CD4-positive, alpha-beta T cell (primary cell): ENCODE measurements at regions of chr4 and their contacts with region 1.

Region 1: GRCh38 chr4:164731827-164732474 is 22.0 kb upstream of the SMIM31 start:
- DNase-seq: peak; percentile 7 to 67 (median 33)
- ATAC-seq: peak; percentile 71
- H3K4me3 ChIP-seq: no peak overlapping the region
- H3K4me3 Mint-ChIP-seq: no peak overlapping the region
- H3K27ac ChIP-seq: no peak overlapping the region
- H3K27ac Mint-ChIP-seq: no peak overlapping the region
- H3K4me1 ChIP-seq: no peaks in the 10 kb centered on the region
- H3K4me1 Mint-ChIP-seq: no peaks in the 10 kb centered on the region
- H3K27me3 ChIP-seq: peaks cover 0 to 10% of the 10 kb centered on the region in 2 experiments
- H3K27me3 Mint-ChIP-seq: peaks cover 28% of the 10 kb centered on the region
- CTCF ChIP-seq: peak; percentile 90

Region 2: GRCh38 chr4:163484906-163485305 is 1247.0 kb before region 1 on chr4:
- CTCF ChIA-PET with region 1: no interaction called
- POLR2A ChIA-PET with region 1: no interaction called
- intact Hi-C with region 1: loop called (anchors 5 to 10 kb)
- DNase-seq: peak; percentile 14 to 77 (median 39)
- ATAC-seq: peak; percentile 60
- H3K4me3 ChIP-seq: no peak overlapping the region
- H3K4me3 Mint-ChIP-seq: no peak overlapping the region
- H3K27ac ChIP-seq: no peak overlapping the region
- H3K27ac Mint-ChIP-seq: no peak overlapping the region
- H3K4me1 ChIP-seq: no peaks in the 10 kb centered on the region
- H3K4me1 Mint-ChIP-seq: no peaks in the 10 kb centered on the region
- H3K27me3 ChIP-seq: no peaks in the 10 kb centered on the region
- H3K27me3 Mint-ChIP-seq: peaks cover 11% of the 10 kb centered on the region
- CTCF ChIP-seq: peak; percentile 71

Region 3: DNA sequence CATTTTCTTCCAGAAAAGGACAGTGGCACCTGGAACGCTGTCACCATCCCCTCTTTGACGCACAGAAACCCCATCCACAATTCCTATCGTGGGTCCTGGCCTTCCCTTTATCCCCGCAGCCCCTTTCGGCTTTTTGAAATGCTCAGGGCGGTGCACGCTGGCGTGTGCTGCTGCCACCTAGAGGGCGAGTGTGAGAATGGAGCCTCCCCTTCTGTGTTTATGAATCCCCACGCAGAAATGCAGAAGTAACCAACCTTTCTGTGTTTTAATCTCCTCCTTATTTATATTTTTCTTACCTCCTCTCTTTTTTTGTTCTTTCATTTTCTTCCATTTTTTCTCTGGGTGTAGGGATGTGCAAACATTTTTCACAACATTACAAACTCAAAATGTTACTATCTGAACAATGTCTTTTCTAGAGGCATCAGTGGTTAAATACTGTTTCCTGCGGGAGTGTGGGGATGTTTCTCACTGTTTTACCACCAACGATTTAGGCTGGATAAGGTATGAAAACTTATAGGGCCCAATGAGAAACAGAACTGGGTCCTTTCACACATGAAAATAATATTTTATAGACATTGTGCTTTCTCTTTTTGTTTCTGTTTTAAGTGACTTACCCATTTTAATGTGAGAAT is 1187.4 kb before region 1 on chr4:
- CTCF ChIA-PET with region 1: no interaction called
- POLR2A ChIA-PET with region 1: no interaction called
- intact Hi-C with region 1: no loop called
- DNase-seq: peak; percentile 26 to 81 (median 49)
- ATAC-seq: peak; percentile 91
- H3K4me3 ChIP-seq: peak overlapping the region; percentile 33
- H3K4me3 Mint-ChIP-seq: no peak overlapping the region
- H3K27ac ChIP-seq: no peak overlapping the region
- H3K27ac Mint-ChIP-seq: no peak overlapping the region
- H3K4me1 ChIP-seq: peaks cover 3% of the 10 kb centered on the region
- H3K4me1 Mint-ChIP-seq: peaks cover 12% of the 10 kb centered on the region
- H3K27me3 ChIP-seq: no peaks in the 10 kb centered on the region
- H3K27me3 Mint-ChIP-seq: no peaks in the 10 kb centered on the region
- CTCF ChIP-seq: peak; percentile 99

Region 4: GRCh38 chr4:164748375-164748774 is 16.4 kb after region 1 on chr4:
- CTCF ChIA-PET with region 1: interaction called, 11 read pairs
- POLR2A ChIA-PET with region 1: no interaction called
- intact Hi-C with region 1: no loop called
- DNase-seq: peak in 2 of 14 experiments; percentile 9 to 19
- ATAC-seq: no peak
- H3K4me3 ChIP-seq: no peak overlapping the region
- H3K4me3 Mint-ChIP-seq: no peak overlapping the region
- H3K27ac ChIP-seq: no peak overlapping the region
- H3K27ac Mint-ChIP-seq: no peak overlapping the region
- H3K4me1 ChIP-seq: no peaks in the 10 kb centered on the region
- H3K4me1 Mint-ChIP-seq: no peaks in the 10 kb centered on the region
- H3K27me3 ChIP-seq: no peaks in the 10 kb centered on the region
- H3K27me3 Mint-ChIP-seq: peaks cover 9% of the 10 kb centered on the region
- CTCF ChIP-seq: peak; percentile 45

Region 5: DNA sequence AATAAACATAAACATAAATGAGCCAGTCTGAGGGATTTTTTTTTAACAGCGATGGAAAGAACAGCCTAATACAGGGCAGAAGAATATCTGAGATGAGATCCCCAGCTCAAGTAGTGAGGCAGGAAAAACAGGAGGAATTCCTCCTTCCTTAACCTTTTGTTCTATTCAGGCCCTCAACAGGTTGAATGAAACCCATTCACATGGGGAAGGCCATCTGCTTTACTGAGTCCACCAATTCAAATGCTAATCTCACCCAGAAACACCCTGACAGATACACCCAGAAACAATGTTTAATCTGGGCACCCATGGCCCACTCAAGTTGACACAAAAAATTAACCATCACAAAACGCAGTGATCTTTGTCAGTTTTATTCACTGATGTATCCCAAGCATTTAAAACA is 67.5 kb after region 1 on chr4:
- CTCF ChIA-PET with region 1: no interaction called
- POLR2A ChIA-PET with region 1: no interaction called
- intact Hi-C with region 1: no loop called
- DNase-seq: no peak
- ATAC-seq: no peak
- H3K4me3 ChIP-seq: no peak overlapping the region
- H3K4me3 Mint-ChIP-seq: no peak overlapping the region
- H3K27ac ChIP-seq: no peak overlapping the region
- H3K27ac Mint-ChIP-seq: no peak overlapping the region
- H3K4me1 ChIP-seq: no peaks in the 10 kb centered on the region
- H3K4me1 Mint-ChIP-seq: no peaks in the 10 kb centered on the region
- H3K27me3 ChIP-seq: no peaks in the 10 kb centered on the region
- H3K27me3 Mint-ChIP-seq: no peaks in the 10 kb centered on the region
- CTCF ChIP-seq: no peak